ENCODE measurements at regions of chr20 and their contacts with region 1.

Region 1: GRCh38 chr20:41173161-41173721 is 35.9 kb downstream of the PLCG1 start:
- DNase-seq: peak; percentile 78 to 85 (median 81)
- ATAC-seq: peak; percentile 89 to 95 (median 94)
- H3K4me3 ChIP-seq: no peak overlapping the region
- H3K27ac ChIP-seq: no peak overlapping the region
- H3K4me1 ChIP-seq: no peaks in the 10 kb centered on the region
- H3K27me3 ChIP-seq: no peaks in the 10 kb centered on the region
- CTCF ChIP-seq: peak; percentile 96 to 97 (median 96)
- POLR2A ChIP-seq: no peak

Region 2: DNA sequence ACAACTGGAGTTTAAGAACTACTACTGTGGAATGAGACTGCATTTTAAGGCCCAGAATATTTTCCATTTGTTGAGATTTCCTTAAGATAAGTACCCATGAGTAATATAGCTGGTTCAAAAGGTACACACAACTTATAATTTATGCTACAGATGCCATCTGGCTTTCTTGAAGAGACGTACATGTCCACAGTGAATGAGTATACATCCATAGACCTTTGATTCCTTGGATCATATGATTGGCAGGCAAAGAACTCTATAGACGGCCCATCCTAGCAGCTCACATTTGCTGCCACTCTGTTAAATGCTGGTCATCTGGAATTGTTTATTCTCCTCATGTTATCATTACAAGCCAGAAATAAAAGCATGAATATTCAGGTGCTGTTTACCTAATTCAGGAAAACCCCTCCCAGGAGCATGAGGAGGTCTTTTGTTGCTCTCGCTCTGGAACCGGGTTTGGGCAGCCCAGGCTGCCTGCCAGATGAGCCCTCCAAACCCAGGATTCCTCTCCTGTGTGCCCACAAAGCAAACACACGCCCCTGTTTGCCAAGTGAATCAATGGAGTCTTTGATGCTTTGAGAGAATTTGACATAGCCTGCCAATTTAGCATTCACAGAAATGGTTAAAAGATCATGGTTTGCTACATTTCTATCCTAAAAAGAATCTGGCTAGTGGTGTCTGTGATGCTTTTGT is 53.5 kb before region 1 on chr20:
- intact Hi-C with region 1: no loop called
- DNase-seq: no peak
- ATAC-seq: peak in 3 of 4 donors; percentile 12 to 62 (median 58)
- H3K4me3 ChIP-seq: no peak overlapping the region
- H3K27ac ChIP-seq: no peak overlapping the region
- H3K4me1 ChIP-seq: peaks cover 0 to 6% (median 0%) of the 10 kb centered on the region in 4 donors
- H3K27me3 ChIP-seq: no peaks in the 10 kb centered on the region
- CTCF ChIP-seq: no peak
- POLR2A ChIP-seq: no peak

Region 3: GRCh38 chr20:41228858-41229630 is 55.8 kb after region 1 on chr20:
- intact Hi-C with region 1: loop called in 1 of 2 experiments (anchors 10 kb)
- DNase-seq: no peak
- ATAC-seq: no peak
- H3K4me3 ChIP-seq: no peak overlapping the region
- H3K27ac ChIP-seq: no peak overlapping the region
- H3K4me1 ChIP-seq: peaks cover 0 to 16% (median 8%) of the 10 kb centered on the region in 4 donors
- H3K27me3 ChIP-seq: no peaks in the 10 kb centered on the region
- CTCF ChIP-seq: no peak
- POLR2A ChIP-seq: no peak

Region 4: DNA sequence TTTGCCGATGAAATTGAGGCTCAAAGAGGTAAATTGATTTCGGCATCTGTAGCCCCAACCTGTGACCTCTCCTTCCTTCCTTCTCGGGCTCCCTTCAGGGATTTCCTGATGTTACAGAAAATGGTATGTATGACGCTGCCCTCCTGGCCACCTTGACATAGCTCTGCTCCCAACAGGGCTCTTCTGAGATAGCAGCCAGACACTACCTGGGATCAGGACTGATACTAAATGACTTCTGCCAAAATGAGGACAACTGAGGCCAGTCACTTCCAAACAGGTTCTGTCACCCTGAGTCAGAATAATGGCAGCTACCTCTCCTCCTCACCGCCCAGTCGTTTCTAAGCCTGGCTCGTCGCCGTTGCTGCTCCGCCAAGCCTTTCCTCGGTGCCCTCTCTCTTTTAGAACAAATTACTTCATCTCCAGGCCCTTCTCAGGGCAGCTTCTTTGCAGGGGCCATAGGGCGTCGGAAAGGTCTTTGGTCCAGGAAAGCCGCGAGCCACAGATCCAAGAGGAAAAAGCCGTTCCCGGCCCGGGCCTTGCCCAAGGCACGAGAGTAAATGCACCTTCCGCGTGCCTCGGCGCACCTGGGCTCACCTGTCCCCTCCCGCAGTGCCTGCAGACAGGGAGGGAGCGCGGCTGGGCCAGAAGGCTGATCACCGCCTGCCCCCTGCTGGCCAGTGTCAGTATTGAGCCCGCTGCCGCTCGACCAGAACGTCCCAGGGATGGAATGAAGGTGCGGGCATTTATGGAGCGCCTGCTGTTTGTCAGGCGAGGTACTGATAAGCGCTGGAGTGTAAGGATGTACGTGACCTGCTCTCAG is 166.5 kb after region 1 on chr20:
- intact Hi-C with region 1: loop called (anchors 5 kb)
- DNase-seq: peak; percentile 87 to 92 (median 88)
- ATAC-seq: peak; percentile 83 to 86 (median 85)
- H3K4me3 ChIP-seq: peak overlapping the region; percentile 21 to 76 (median 61)
- H3K27ac ChIP-seq: peak overlapping the region in 2 of 3 donors; percentile 32 to 52
- H3K4me1 ChIP-seq: peaks cover 0 to 13% (median 5%) of the 10 kb centered on the region in 4 donors
- H3K27me3 ChIP-seq: no peaks in the 10 kb centered on the region
- CTCF ChIP-seq: peak; percentile 99
- POLR2A ChIP-seq: no peak

Measured in right lobe of liver (tissue), 6 donors.